ENCODE measurements at regions of chr13 and their contacts with region 1.

Region 1: GRCh38 chr13:76489274-76489673 is 396.9 kb downstream of the KCTD12 start:
- DNase-seq: no peak
- H3K4me3 ChIP-seq: no peak overlapping the region
- H3K27ac ChIP-seq: no peak overlapping the region
- H3K4me1 ChIP-seq: no peaks in the 10 kb centered on the region; a peak in 1 of 7 replicates
- H3K27me3 ChIP-seq: no peaks in the 10 kb centered on the region
- CTCF ChIP-seq: no peak
- EP300 ChIP-seq: no peak
- POLR2A ChIP-seq: no peak
- RAD21 ChIP-seq: no peak

Region 2: GRCh38 chr13:76903544-76904162 is 414.4 kb after region 1 on chr13:
- CTCF ChIA-PET with region 1: interaction called, 16 read pairs
- POLR2A ChIA-PET with region 1: no interaction called
- DNase-seq: peak; percentile 41 to 75
- H3K4me3 ChIP-seq: no peak overlapping the region
- H3K27ac ChIP-seq: no peak overlapping the region
- H3K4me1 ChIP-seq: no peaks in the 10 kb centered on the region
- H3K27me3 ChIP-seq: no peaks in the 10 kb centered on the region
- CTCF ChIP-seq: peak; percentile 75 to 99 (median 82)
- EP300 ChIP-seq: no peak
- POLR2A ChIP-seq: no peak
- RAD21 ChIP-seq: peak; percentile 98 to 99